MCF 10A (cell line): ENCODE measurements at regions of chr10 and their contacts with region 1.

Region 1: DNA sequence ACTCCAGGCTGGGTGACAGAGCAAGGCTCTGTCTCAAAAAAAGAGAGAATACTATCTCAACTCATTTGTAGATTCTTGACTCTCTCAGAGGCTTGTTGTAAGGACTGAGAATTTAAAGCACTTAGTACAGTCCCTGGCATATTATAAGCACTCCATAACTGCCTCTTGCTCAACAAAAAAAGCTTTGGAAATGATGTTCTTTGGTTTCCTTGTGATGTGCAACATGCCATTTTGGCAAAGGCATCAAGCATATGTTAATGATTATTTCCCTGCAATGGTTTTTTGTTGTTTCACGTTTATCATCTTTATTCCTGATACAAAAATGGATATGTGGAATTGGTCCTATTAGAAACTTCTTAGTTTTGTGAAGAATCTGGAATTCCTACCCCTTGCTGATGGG is 15.7 kb downstream of the NOLC1 start:
- DNase-seq: no peak
- H3K4me3 Mint-ChIP-seq: no peak overlapping the region
- H3K27ac Mint-ChIP-seq: no peak overlapping the region
- H3K4me1 Mint-ChIP-seq: peaks cover 5% of the 10 kb centered on the region
- H3K27me3 Mint-ChIP-seq: peaks cover 11% of the 10 kb centered on the region
- CTCF ChIP-seq: no peak

Region 2: DNA sequence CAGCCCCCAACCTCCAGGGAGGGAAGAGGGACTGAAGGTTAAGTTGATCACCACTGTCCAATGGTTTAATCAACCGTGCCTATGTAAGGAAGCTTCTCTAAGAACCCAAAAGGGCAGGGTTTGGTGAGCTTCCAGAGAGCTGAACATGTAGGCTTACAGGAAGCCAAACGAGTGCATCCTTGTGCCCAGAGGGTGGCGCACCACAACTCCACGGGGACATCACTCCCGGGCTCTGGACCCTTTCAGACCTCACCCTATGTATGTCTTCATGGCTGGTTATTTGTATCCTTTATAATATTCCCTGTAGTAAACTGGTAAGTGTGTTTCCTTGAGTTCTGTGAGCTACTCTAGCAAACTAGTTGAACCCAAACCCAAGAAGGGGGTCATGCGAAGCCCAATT is 216.2 kb after region 1 on chr10:
- CTCF ChIA-PET with region 1: interaction called, 12 read pairs
- POLR2A ChIA-PET with region 1: no interaction called
- intact Hi-C with region 1: no loop called
- DNase-seq: no peak
- H3K4me3 Mint-ChIP-seq: no peak overlapping the region
- H3K27ac Mint-ChIP-seq: no peak overlapping the region
- H3K4me1 Mint-ChIP-seq: no peaks in the 10 kb centered on the region
- H3K27me3 Mint-ChIP-seq: no peaks in the 10 kb centered on the region
- CTCF ChIP-seq: no peak

Region 3: GRCh38 chr10:102583435-102584417 is 415.9 kb after region 1 on chr10:
- CTCF ChIA-PET with region 1: no interaction called
- POLR2A ChIA-PET with region 1: no interaction called
- intact Hi-C with region 1: loop called (anchors 5 kb)
- DNase-seq: peak; percentile 87
- H3K4me3 Mint-ChIP-seq: no peak overlapping the region
- H3K27ac Mint-ChIP-seq: no peak overlapping the region
- H3K4me1 Mint-ChIP-seq: no peaks in the 10 kb centered on the region
- H3K27me3 Mint-ChIP-seq: no peaks in the 10 kb centered on the region
- CTCF ChIP-seq: peak; percentile 78